CD14-positive monocyte (primary cell): ENCODE measurements at regions of chr4 and their contacts with region 1.

Region 1: DNA sequence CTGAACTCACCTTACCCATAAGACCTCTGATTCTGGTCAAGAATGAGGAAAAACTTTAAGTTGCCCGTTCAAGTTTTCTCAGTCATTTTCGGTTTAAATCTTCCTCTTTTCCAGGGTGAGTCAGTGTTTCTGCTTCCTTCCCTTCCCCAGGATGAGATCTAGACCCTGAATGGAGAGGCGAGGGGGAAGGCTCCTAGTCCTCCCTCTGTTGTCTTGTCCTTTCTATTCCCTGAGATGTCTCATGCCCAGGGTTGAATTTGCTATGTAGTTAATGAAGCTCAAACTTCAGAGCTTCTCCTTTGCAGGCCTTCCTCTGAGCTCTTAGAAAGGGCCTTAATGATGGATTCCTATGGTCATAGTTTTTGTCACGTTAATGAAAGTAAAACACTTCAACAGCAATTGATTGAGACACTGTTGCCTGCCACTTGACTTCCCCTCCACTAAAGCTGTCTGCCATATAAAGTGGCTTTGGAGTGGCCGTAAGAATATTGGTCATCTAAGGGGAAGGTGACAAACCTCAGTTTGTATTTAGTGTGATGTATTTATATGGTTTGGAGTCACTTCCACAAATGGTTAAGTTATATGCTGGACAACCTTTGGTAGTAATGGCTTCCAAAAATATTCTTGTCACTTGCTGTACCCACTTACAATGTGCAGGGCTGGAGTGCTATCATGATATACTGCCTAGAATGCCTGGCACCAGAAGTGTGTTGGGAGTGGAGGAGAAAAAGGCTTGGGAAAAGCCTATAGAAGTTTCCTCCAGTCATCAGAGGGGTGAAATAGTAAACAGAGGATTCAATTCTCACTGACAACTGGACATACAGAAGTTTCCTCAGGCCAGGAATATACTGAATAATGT is 24.3 kb upstream of the GPRIN3 start:
- DNase-seq: peak; percentile 64 to 80 (median 75)
- H3K4me3 ChIP-seq: peak overlapping the region; percentile 20 to 73 (median 57)
- H3K4me3 Mint-ChIP-seq: peak overlapping the region; percentile 66 to 78
- H3K27ac ChIP-seq: peak overlapping the region; percentile 40 to 89
- H3K27ac Mint-ChIP-seq: peak overlapping the region; percentile 82 to 96 (median 92)
- H3K4me1 ChIP-seq: peaks cover 32 to 42% of the 10 kb centered on the region in 2 donors
- H3K4me1 Mint-ChIP-seq: peaks cover 40% of the 10 kb centered on the region
- H3K27me3 ChIP-seq: no peaks in the 10 kb centered on the region
- H3K27me3 Mint-ChIP-seq: no peaks in the 10 kb centered on the region
- CTCF ChIP-seq: no peak

Region 2: DNA sequence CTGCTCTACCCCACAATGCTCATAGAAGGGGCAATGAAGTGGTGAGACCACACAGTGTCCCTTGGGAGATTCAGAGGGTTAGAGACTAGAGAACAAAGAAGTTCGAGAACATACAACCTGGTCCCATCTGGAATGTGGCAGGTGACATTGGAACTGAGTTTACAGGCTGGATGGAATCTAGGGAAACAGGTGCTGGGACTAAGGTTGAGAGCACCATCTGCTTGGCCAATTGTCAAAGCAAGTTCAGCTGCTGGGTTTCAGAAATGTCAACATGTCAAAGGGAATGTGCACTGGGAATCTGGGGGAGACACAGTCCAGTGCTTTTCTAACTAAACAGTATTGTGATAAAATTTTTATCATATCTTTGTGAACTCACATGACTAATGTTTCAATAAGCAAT is 259.0 kb before region 1 on chr4:
- intact Hi-C with region 1: no loop called
- DNase-seq: no peak
- H3K4me3 ChIP-seq: no peak overlapping the region
- H3K4me3 Mint-ChIP-seq: no peak overlapping the region
- H3K27ac ChIP-seq: no peak overlapping the region
- H3K27ac Mint-ChIP-seq: no peak overlapping the region
- H3K4me1 ChIP-seq: no peaks in the 10 kb centered on the region
- H3K4me1 Mint-ChIP-seq: peaks cover 11% of the 10 kb centered on the region
- H3K27me3 ChIP-seq: no peaks in the 10 kb centered on the region
- H3K27me3 Mint-ChIP-seq: peaks cover 0 to 4% (median 1%) of the 10 kb centered on the region in 3 donors
- CTCF ChIP-seq: no peak

Region 3: GRCh38 chr4:89283226-89284009 is 48.5 kb before region 1 on chr4:
- intact Hi-C with region 1: loop called in 1 of 2 experiments (anchors 10 kb)
- DNase-seq: peak in 2 of 3 donors; percentile 62 to 72
- H3K4me3 ChIP-seq: peak overlapping the region in 1 of 3 experiments; percentile 27
- H3K4me3 Mint-ChIP-seq: no peak overlapping the region
- H3K27ac ChIP-seq: peak overlapping the region in 1 of 2 donors; percentile 67
- H3K27ac Mint-ChIP-seq: peak overlapping the region; percentile 58 to 91 (median 83)
- H3K4me1 ChIP-seq: peaks cover 28 to 32% of the 10 kb centered on the region in 2 donors
- H3K4me1 Mint-ChIP-seq: peaks cover 35% of the 10 kb centered on the region
- H3K27me3 ChIP-seq: no peaks in the 10 kb centered on the region
- H3K27me3 Mint-ChIP-seq: no peaks in the 10 kb centered on the region
- CTCF ChIP-seq: no peak

Region 4: DNA sequence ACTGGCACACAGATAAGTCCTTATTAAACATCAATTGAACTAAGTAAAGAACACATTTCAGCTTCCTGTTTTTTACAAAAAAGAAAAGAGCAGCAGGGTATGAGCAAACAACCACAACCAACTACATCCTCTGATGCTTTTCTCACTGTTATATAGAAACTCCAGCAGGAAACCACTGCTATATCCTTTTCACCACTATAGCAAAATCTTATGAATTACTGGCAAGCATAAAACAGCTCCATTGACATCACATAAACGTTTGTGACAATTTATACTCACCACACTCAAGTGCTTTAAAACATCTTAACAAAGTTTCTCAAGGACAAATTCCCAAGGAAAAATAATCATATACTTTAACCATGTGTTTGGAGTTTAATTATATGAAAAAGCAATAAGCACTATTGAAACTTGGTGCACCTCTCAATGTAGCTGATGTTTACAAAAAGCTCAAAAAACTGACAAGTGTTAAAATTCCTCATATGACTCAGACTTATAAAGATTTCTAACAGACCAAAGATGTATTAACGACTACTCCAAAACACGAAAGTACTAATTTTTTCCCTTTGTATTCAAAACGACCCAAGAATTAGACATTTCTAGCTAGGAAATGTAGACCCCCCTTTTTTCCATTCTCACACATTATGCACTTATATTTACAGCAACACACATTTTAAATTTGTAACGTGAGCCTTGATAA is 37.2 kb before region 1 on chr4:
- intact Hi-C with region 1: loop called (anchors 5 to 10 kb)
- DNase-seq: peak in 2 of 3 donors; percentile 40 to 54
- H3K4me3 ChIP-seq: no peak overlapping the region
- H3K4me3 Mint-ChIP-seq: no peak overlapping the region
- H3K27ac ChIP-seq: peak overlapping the region in 1 of 2 donors; percentile 6
- H3K27ac Mint-ChIP-seq: peak overlapping the region in 4 of 7 donors; percentile 12 to 86 (median 41)
- H3K4me1 ChIP-seq: peaks cover 38 to 60% of the 10 kb centered on the region in 2 donors
- H3K4me1 Mint-ChIP-seq: peaks cover 52% of the 10 kb centered on the region
- H3K27me3 ChIP-seq: no peaks in the 10 kb centered on the region
- H3K27me3 Mint-ChIP-seq: peaks cover 0 to 5% (median 4%) of the 10 kb centered on the region in 3 donors
- CTCF ChIP-seq: no peak

Region 5: GRCh38 chr4:89305028-89305427 is 26.9 kb before region 1 on chr4:
- intact Hi-C with region 1: no loop called
- DNase-seq: no peak
- H3K4me3 ChIP-seq: peak overlapping the region in 1 of 3 experiments; percentile 84
- H3K4me3 Mint-ChIP-seq: no peak overlapping the region
- H3K27ac ChIP-seq: peak overlapping the region; percentile 17 to 49
- H3K27ac Mint-ChIP-seq: peak overlapping the region; percentile 8 to 91 (median 69)
- H3K4me1 ChIP-seq: peaks cover 48 to 56% of the 10 kb centered on the region in 2 donors
- H3K4me1 Mint-ChIP-seq: peaks cover 52% of the 10 kb centered on the region
- H3K27me3 ChIP-seq: no peaks in the 10 kb centered on the region
- H3K27me3 Mint-ChIP-seq: peaks cover 0 to 2% (median 0%) of the 10 kb centered on the region in 3 donors
- CTCF ChIP-seq: no peak